Panc1 (cell line): ENCODE measurements at regions of chr4 and their contacts with region 1.

Region 1: DNA sequence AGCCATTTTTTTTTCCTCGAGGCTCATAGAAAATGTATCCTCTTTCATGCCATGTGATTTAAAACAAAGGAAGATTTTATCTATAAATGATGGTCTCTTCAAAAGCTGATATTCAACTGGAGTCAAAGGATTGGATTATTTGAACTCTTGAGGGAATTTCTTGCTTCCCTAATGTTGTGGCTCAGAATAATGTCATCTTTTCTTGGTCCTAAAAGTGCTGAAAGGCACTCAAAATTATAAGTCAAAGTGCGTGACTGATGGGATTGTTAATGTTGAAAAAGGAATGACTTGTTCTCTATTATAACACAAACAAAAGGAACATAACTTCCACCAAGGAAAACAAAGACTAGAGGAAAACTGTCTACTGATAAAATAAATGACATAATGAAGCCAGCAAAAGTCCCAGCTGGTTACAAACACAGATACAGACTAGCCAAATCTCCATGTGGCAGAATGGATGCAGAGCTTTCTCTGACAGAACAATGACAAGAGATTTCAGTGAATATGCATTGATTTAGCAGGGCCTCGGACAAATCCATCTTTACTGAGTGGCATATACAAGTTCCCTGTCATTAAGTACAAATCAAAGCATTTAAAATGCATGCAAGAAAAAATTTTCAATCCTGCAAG is 552.6 kb downstream of the GBA3 start:
- DNase-seq: no peak
- ATAC-seq: no peak
- H3K4me3 ChIP-seq: no peak overlapping the region
- H3K27ac ChIP-seq: no peak overlapping the region
- H3K4me1 ChIP-seq: no peaks in the 10 kb centered on the region
- H3K27me3 ChIP-seq: no peaks in the 10 kb centered on the region
- CTCF ChIP-seq: no peak

Region 2: GRCh38 chr4:22607382-22607781 is 637.9 kb before region 1 on chr4:
- CTCF ChIA-PET with region 1: no interaction called
- POLR2A ChIA-PET with region 1: no interaction called
- in situ Hi-C with region 1: no loop called
- intact Hi-C with region 1: no loop called
- DNase-seq: no peak
- ATAC-seq: peak; percentile 65; the same call in 1 of the 2 replicates
- H3K4me3 ChIP-seq: no peak overlapping the region
- H3K27ac ChIP-seq: no peak overlapping the region
- H3K4me1 ChIP-seq: no peaks in the 10 kb centered on the region
- H3K27me3 ChIP-seq: no peaks in the 10 kb centered on the region
- CTCF ChIP-seq: peak; percentile 37

Region 3: DNA sequence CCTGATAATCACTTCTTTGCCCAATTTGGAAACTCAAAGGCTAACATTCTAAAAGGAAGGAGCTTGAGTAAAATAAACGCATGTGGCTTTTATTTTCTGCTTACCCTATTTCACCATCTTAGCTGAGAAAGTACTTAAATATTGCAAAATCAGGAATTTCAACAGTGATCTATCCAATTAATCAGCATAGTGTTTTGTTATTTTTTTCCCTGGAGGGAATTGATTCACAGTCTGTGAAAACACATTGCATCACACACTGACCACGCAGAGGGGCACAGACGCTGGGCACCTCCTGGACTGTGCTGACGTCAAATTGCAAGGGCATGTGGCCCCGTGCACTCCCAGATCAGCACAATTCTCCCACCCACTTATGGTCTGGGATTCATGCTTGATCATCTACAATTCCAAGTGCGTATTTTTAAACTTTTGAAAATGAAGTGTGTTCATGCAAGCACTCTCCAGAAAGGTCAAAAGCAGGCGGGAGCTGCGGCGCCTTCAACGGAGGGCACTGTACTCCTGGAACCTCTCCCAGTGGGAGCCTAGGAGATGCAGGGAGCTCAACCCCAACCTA is 965.1 kb after region 1 on chr4:
- CTCF ChIA-PET with region 1: no interaction called
- POLR2A ChIA-PET with region 1: no interaction called
- in situ Hi-C with region 1: no loop called
- intact Hi-C with region 1: loop called (anchors 5 kb)
- DNase-seq: no peak
- ATAC-seq: no peak
- H3K4me3 ChIP-seq: no peak overlapping the region
- H3K27ac ChIP-seq: no peak overlapping the region
- H3K4me1 ChIP-seq: no peaks in the 10 kb centered on the region
- H3K27me3 ChIP-seq: no peaks in the 10 kb centered on the region
- CTCF ChIP-seq: no peak